Ovary (tissue), 10 donors: ENCODE measurements at regions of chr2 and their contacts with region 1.

Region 1: GRCh38 chr2:192634557-192634956 is 439.8 kb upstream of the TMEFF2 start:
- DNase-seq: no peak
- H3K4me3 ChIP-seq: no peak overlapping the region
- H3K27ac ChIP-seq: no peak overlapping the region
- H3K4me1 ChIP-seq: no peaks in the 10 kb centered on the region
- H3K27me3 ChIP-seq: no peaks in the 10 kb centered on the region
- CTCF ChIP-seq: no peak
- EP300 ChIP-seq: no peak
- POLR2A ChIP-seq: no peak

Region 2: GRCh38 chr2:192194866-192195547 is 439.6 kb before region 1 on chr2 and contains the start of gene TMEFF2:
- intact Hi-C with region 1: loop called in 1 of 4 experiments (anchors 5 kb)
- DNase-seq: peak; percentile 42 to 68 (median 50)
- H3K4me3 ChIP-seq: peak within 1 kb of the TSS; percentile 31
- H3K27ac ChIP-seq: no peak within 1 kb of the TSS
- H3K4me1 ChIP-seq: peaks cover 5% of the 10 kb centered on the region
- H3K27me3 ChIP-seq: no peaks in the 10 kb centered on the region
- CTCF ChIP-seq: no peak
- EP300 ChIP-seq: no peak
- POLR2A ChIP-seq: no peak
- total RNA-seq, gene TMEFF2: 0.10 to 0.34 TPM in 2 of 7 donors, not detected in the others

Region 3: DNA sequence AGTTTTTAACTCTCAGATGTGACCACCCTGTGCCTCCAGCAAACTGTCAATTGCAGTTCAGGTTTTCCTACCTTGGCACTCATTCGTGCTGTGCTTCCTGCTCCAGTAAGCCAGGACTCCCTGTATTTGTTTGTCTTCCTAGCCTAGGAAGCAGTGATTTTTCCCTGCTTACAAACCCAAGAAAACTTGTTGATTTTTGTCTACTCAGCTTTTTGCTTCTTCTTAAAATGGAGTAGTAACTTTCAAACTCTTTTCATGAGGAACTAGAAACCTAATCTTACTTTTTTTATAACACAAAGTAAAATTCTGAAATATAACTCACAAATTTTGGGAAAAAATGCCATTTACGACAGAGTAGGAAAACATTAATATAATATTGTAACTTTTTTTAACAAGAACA is 289.3 kb before region 1 on chr2:
- intact Hi-C with region 1: no loop called
- DNase-seq: no peak
- H3K4me3 ChIP-seq: no peak overlapping the region
- H3K27ac ChIP-seq: no peak overlapping the region
- H3K4me1 ChIP-seq: no peaks in the 10 kb centered on the region
- H3K27me3 ChIP-seq: no peaks in the 10 kb centered on the region
- CTCF ChIP-seq: no peak
- EP300 ChIP-seq: no peak
- POLR2A ChIP-seq: no peak

Region 4: DNA sequence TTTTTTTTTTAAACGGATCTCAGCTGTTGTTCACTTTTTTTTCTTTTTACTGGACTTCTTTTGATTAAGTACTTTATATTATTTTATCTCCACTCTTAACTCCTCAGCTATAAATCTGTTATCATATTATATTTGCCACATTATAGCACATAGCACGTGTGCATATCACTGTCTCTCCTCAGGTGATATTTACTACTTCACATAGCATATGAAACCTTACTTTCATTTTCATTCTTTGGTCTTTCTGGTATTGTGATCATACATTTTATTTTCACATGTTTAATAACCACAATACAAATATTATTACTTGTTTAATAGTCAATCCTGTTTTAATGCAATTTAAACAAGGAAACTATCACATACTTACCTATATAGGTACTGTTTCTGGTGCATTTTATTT is 553.3 kb after region 1 on chr2:
- intact Hi-C with region 1: no loop called
- DNase-seq: no peak
- H3K4me3 ChIP-seq: no peak overlapping the region
- H3K27ac ChIP-seq: no peak overlapping the region
- H3K4me1 ChIP-seq: no peaks in the 10 kb centered on the region
- H3K27me3 ChIP-seq: no peaks in the 10 kb centered on the region
- CTCF ChIP-seq: no peak
- EP300 ChIP-seq: no peak
- POLR2A ChIP-seq: no peak

Region 5: DNA sequence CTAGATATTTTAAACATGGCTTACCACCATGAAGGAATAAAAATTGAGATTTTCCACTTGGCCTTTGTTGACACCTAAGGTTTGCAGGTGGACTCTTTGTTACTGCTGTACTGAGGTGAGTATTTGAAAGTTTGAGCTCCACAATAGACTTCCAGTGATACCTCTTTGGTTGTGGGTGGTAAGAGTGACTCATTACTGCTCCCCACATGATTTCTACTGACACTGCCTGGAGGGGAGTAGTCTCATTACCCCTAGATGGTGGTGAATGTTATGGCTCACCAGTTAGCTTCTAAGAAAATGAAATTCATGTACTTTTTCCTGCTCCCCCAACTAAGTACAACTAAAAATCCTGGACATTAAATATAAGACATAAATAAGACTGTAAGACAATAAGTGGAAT is 743.2 kb after region 1 on chr2:
- intact Hi-C with region 1: no loop called
- DNase-seq: no peak
- H3K4me3 ChIP-seq: no peak overlapping the region
- H3K27ac ChIP-seq: no peak overlapping the region
- H3K4me1 ChIP-seq: no peaks in the 10 kb centered on the region
- H3K27me3 ChIP-seq: no peaks in the 10 kb centered on the region
- CTCF ChIP-seq: no peak
- EP300 ChIP-seq: no peak
- POLR2A ChIP-seq: no peak